Activated B cell treated with CpG ODN at 0.5 μM for 24 hours (primary cell): ENCODE measurements at regions of chr16 and their contacts with region 1.

Region 1: DNA sequence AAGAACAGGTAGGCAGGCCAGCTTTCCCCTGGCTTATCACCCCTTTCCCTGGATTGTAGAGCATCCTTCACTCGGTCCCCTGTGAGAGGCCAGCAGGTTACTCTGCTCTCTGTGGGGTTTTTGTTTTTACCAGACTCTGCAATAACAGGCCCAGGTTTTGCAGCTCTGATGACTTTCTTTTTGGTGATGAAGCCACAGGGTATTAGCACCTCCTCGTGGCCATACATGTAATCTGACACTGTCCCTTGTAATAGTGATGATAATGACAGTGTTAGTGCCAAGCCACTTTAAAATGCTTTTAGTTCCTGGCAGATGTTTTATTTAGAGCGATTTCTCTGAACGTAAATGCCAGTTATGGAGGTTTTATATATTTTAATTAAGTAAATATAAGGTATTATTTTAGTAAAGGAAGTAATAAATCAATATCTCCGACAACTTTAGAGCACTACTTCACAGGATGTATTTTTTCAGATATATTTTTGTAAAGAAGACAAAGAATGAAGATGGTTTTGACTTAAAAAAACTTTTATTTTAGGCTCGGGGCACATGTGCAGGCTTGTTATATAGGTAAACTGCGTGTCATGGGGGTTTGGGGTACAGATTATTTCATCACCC is 38.0 kb upstream of the CPHXL start:
- DNase-seq: no peak
- ATAC-seq: peak; percentile 56
- H3K4me3 Mint-ChIP-seq: no peak overlapping the region
- H3K27ac Mint-ChIP-seq: no peak overlapping the region
- H3K4me1 Mint-ChIP-seq: peaks cover 25% of the 10 kb centered on the region
- H3K27me3 Mint-ChIP-seq: peaks cover 6% of the 10 kb centered on the region
- CTCF ChIP-seq: peak; percentile 37

Region 2: DNA sequence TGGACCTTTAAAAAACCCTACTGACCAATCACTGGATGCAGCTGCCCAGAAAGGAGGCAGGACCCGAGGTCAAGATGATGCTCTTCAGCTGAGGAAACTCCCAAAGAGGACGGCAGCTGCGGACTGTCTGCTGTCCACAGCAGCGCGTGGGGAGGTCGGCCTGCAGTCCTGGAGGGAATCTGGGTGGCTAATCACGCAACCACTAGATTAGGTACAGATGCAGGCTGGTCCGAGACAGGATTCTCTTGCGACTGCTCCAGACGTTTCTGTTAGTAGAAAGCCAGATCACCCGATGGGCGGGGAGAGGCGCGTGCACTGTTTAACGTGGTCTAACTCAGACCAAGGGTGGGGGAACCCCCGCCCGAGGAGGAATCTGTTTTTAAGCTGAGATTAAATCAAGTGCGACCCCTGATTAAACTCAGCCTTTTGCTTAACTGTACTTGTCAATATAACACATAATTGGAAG is 566.1 kb before region 1 on chr16:
- CTCF ChIA-PET with region 1: interaction called, 27 read pairs
- POLR2A ChIA-PET with region 1: interaction called, 5 read pairs
- intact Hi-C with region 1: loop called (anchors 1 kb)
- DNase-seq: no peak
- ATAC-seq: no peak
- H3K4me3 Mint-ChIP-seq: no peak overlapping the region
- H3K27ac Mint-ChIP-seq: no peak overlapping the region
- H3K4me1 Mint-ChIP-seq: peaks cover 14% of the 10 kb centered on the region
- H3K27me3 Mint-ChIP-seq: peaks cover 39% of the 10 kb centered on the region
- CTCF ChIP-seq: no peak

Region 3: GRCh38 chr16:75385507-75386152 is 378.6 kb before region 1 on chr16:
- CTCF ChIA-PET with region 1: interaction called, 9 read pairs
- POLR2A ChIA-PET with region 1: no interaction called
- intact Hi-C with region 1: loop called (anchors 2 kb)
- DNase-seq: no peak
- ATAC-seq: peak; percentile 37
- H3K4me3 Mint-ChIP-seq: no peak overlapping the region
- H3K27ac Mint-ChIP-seq: no peak overlapping the region
- H3K4me1 Mint-ChIP-seq: peaks cover 9% of the 10 kb centered on the region
- H3K27me3 Mint-ChIP-seq: peaks cover 31% of the 10 kb centered on the region
- CTCF ChIP-seq: peak; percentile 51

Region 4: DNA sequence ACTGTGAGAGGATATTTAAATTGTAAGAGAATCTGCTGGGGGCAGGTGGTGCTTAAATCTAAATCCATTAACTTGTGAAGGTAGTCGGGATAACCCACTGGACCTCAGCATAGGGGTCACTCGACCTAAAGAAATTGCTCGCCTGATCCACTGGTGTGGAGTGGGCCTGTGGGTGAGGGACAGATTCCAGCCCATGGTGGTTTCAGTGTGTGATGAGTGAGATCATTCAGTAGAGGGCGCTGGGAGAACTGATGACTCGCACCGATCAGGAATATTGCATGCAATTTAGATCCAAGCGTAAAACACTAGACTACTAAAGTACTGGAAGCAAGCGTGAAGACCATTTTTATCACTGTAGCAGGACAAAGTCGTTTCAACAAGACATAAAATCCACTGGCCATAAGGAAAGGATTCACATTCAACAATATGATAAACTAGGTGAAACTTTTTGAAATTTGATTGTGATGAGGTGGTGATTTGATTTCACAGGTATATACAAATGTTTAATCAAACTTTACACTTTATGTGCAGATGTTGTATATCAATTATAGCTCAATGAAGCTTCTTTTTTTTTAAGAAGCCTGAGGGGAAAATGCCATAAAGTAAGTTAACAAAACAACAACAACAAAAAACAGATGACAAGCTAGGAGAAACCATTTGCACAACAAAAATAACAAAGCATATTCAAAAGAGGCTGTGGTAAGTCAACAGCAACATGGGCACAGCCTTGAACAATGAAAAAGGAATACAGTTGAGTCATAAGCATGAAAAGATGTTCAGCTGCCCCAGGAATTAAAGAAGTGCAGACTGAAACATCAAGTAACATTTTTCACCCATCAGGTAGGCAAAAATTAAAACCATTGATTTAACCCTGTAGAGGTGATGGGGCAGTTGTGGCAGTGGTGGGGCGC is 292.3 kb before region 1 on chr16:
- CTCF ChIA-PET with region 1: interaction called, 6 read pairs
- POLR2A ChIA-PET with region 1: no interaction called
- intact Hi-C with region 1: loop called (anchors 1 kb)
- DNase-seq: no peak
- ATAC-seq: peak; percentile 82
- H3K4me3 Mint-ChIP-seq: no peak overlapping the region
- H3K27ac Mint-ChIP-seq: no peak overlapping the region
- H3K4me1 Mint-ChIP-seq: no peaks in the 10 kb centered on the region
- H3K27me3 Mint-ChIP-seq: no peaks in the 10 kb centered on the region
- CTCF ChIP-seq: no peak

Region 5: DNA sequence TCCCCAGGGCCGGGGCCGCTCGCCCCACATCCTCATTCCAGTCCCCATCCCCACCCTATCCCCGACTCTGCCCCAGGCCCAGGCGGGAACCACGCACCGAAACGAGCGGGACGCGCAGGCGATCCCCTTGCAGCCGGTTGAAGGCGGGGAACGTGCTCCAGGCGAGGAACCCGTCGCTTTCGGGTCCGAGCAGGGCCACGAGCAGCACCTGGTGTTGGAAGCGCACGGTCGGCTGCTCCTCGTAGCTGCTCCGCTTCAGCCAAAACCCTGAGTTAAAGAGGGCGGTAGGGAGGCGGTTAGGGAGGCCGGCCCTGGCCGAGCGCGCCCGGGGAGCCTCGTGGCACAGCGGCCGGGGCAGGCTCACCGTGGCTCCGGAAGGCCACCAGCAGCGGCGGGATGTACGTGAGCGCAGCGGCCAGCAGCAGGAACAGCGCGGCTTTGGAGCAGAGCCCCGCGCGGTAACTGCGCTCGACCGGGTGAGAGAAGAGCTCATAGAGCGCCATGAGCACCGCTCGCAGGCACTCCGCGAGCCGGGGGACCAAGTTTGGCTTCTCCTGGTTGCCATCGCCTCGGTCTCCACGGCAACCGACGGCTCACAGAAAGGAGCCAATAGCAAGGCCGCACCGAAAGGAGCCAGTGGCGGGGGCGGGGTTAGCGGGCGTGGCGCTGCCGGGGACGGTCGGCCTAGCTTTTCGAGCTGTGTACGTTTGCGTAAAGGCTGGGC is 208.4 kb before region 1 on chr16 and contains the start of gene TMEM231:
- CTCF ChIA-PET with region 1: no interaction called
- POLR2A ChIA-PET with region 1: no interaction called
- intact Hi-C with region 1: loop called (anchors 1 kb)
- DNase-seq: peak; percentile 89
- ATAC-seq: peak; percentile 94
- H3K4me3 Mint-ChIP-seq: peak within 1 kb of the TSS; percentile 93
- H3K27ac Mint-ChIP-seq: peak within 1 kb of the TSS; percentile 89
- H3K4me1 Mint-ChIP-seq: peaks cover 10% of the 10 kb centered on the region
- H3K27me3 Mint-ChIP-seq: no peaks in the 10 kb centered on the region
- CTCF ChIP-seq: no peak
- total RNA-seq, gene TMEM231: 4.0 and 4.1 TPM in 2 replicates

Region 6: GRCh38 chr16:75622761-75623605 is 141.3 kb before region 1 on chr16 and contains the start of gene ADAT1:
- CTCF ChIA-PET with region 1: interaction called, 6 read pairs
- POLR2A ChIA-PET with region 1: interaction called, 7 read pairs
- intact Hi-C with region 1: loop called (anchors 1 kb)
- DNase-seq: peak; percentile 93
- ATAC-seq: peak; percentile 97
- H3K4me3 Mint-ChIP-seq: peak within 1 kb of the TSS; percentile 98
- H3K27ac Mint-ChIP-seq: peak within 1 kb of the TSS; percentile 95
- H3K4me1 Mint-ChIP-seq: peaks cover 22% of the 10 kb centered on the region
- H3K27me3 Mint-ChIP-seq: no peaks in the 10 kb centered on the region
- CTCF ChIP-seq: no peak
- total RNA-seq, gene ADAT1: 52.7 and 57.2 TPM in 2 replicates